ENCODE measurements at regions of chrX and their contacts with region 1.

Region 1: DNA sequence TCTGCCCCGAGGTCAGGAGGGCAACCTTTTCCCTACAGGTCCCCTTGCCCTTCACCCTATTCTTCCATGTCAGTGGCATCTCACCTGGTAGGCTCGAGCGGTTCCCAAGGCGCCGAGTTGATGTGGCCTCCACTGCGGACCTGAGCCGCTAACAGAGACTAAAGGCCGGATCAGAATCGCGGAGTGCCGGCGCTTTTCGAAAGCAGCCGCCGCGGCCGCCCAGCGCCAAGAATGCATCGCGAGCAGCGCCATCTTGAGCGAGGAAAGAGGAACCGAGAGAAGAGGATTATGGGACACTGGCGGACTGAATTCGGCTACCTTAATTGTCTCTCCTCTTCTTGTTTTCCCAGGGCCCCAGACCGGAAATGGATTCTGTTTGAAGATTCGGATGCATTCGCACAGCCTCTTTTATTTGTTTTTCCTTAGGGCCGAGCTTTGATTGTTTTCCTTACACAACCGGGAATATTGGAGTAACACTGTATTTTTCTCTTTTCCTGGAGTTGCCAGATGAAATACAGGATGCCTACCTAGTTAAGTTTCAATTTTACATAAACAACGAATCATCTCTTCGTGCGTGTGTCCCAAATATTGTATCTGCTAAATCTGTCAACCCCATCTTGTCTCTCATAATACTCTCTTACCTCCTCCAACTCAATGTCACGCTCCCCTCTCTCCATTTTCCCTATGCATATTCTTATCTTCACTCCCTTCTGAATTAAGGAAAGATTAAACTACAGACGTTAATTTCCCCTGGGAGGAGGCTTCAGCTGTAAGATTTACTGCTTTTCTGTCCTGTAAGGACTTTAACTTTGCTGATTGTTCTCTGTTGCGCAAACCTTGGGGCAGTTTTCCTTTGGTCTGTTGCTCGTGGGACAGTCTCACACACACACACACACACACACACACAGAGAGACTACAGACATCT is at the start of gene ABCB7:
- DNase-seq: peak; percentile 71
- H3K4me3 Mint-ChIP-seq: peak within 1 kb of the TSS; percentile 93
- H3K27ac Mint-ChIP-seq: peak within 1 kb of the TSS; percentile 97
- H3K4me1 Mint-ChIP-seq: no peaks in the 10 kb centered on the region
- H3K27me3 Mint-ChIP-seq: peaks cover 33% of the 10 kb centered on the region
- CTCF ChIP-seq: no peak
- total RNA-seq, gene ABCB7: 21.2 and 24.7 TPM in 2 replicates

Region 2: GRCh38 chrX:74614093-74614909 is 542.0 kb before region 1 on chrX and contains the start of gene RLIM:
- CTCF ChIA-PET with region 1: no interaction called
- POLR2A ChIA-PET with region 1: no interaction called
- intact Hi-C with region 1: loop called (anchors 10 kb)
- DNase-seq: peak; percentile 93
- H3K4me3 Mint-ChIP-seq: peak within 1 kb of the TSS; percentile 97
- H3K27ac Mint-ChIP-seq: peak within 1 kb of the TSS; percentile 99
- H3K4me1 Mint-ChIP-seq: no peaks in the 10 kb centered on the region
- H3K27me3 Mint-ChIP-seq: peaks cover 15% of the 10 kb centered on the region
- CTCF ChIP-seq: no peak
- total RNA-seq, gene RLIM: 57.2 and 58.4 TPM in 2 replicates

Region 3: DNA sequence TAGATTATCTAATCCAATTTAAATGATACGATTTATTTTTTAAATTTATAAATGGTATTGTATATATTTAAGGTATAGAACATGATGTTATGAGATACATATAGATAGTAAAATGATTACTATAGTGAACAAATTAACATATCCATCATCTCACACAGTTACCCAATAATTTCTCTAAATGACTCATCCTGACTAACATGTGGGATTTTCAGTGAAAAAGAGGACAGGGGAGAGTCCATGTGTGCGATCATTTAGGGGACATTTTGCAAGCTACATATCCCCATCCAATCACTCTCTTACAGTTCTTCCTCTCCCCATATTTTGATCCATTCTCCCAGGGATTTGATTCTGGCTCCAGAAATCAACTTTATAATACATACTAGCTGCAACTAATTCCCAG is 88.4 kb before region 1 on chrX:
- CTCF ChIA-PET with region 1: no interaction called
- POLR2A ChIA-PET with region 1: no interaction called
- intact Hi-C with region 1: no loop called
- DNase-seq: peak; percentile 23
- H3K4me3 Mint-ChIP-seq: no peak overlapping the region
- H3K27ac Mint-ChIP-seq: no peak overlapping the region
- H3K4me1 Mint-ChIP-seq: no peaks in the 10 kb centered on the region
- H3K27me3 Mint-ChIP-seq: no peaks in the 10 kb centered on the region
- CTCF ChIP-seq: no peak

Region 4: GRCh38 chrX:75273483-75273882 is 117.2 kb after region 1 on chrX:
- CTCF ChIA-PET with region 1: interaction called, 3 read pairs
- POLR2A ChIA-PET with region 1: interaction called, 11 read pairs
- intact Hi-C with region 1: loop called (anchors 10 kb)
- DNase-seq: no peak
- H3K4me3 Mint-ChIP-seq: peak overlapping the region; percentile 79
- H3K27ac Mint-ChIP-seq: peak overlapping the region; percentile 92
- H3K4me1 Mint-ChIP-seq: no peaks in the 10 kb centered on the region
- H3K27me3 Mint-ChIP-seq: no peaks in the 10 kb centered on the region
- CTCF ChIP-seq: no peak

Measured in MCF 10A (cell line).